GM12878 (cell line): ENCODE measurements at regions of chr4 and their contacts with region 1.

Region 1: DNA sequence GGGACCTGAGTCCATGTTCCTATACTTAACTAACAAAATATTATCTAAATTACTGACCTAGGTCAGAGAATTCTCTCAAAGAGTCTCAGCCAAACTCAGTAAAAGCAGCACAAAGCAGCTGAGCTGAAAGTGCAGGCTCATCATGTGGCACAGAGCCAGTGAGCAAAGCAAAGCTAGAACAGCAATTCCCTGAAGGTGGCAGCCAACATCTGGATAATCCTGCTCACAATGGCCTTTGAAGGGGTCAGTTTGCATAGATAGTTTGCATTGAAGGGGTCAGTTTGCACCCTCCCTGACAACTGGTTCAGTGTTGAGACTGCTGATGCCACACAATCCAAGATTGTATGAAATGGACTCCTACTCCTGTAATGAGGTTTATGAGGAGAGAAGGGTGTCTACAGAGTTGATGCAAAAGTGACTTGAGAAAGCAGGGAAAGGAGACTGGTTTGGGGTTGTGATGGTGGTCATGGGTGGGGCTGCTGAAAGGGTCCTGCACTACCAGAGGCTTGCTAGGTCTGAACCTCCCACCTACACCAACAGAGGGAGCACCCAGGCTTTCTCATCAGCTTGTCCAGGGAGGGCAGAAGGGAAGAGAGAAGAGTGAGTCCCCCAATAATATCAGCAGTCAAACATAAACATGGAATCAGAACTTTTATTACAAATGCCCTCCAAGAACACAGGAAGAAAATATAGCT is 39.7 kb downstream of the TRIM61 start:
- DNase-seq: peak; percentile 25
- ATAC-seq: peak; percentile 71
- H3K4me3 ChIP-seq: no peak overlapping the region
- H3K27ac ChIP-seq: peak overlapping the region; percentile 30; the same call in 1 of the 2 replicates
- H3K4me1 ChIP-seq: peaks cover 23% of the 10 kb centered on the region
- H3K27me3 ChIP-seq: no peaks in the 10 kb centered on the region
- CTCF ChIP-seq: peak; percentile 43 to 65 (median 56)
- EP300 ChIP-seq: no peak
- POLR2A ChIP-seq: no peak
- RAD21 ChIP-seq: peak; percentile 46; the same call in 1 of the 2 replicates

Region 2: DNA sequence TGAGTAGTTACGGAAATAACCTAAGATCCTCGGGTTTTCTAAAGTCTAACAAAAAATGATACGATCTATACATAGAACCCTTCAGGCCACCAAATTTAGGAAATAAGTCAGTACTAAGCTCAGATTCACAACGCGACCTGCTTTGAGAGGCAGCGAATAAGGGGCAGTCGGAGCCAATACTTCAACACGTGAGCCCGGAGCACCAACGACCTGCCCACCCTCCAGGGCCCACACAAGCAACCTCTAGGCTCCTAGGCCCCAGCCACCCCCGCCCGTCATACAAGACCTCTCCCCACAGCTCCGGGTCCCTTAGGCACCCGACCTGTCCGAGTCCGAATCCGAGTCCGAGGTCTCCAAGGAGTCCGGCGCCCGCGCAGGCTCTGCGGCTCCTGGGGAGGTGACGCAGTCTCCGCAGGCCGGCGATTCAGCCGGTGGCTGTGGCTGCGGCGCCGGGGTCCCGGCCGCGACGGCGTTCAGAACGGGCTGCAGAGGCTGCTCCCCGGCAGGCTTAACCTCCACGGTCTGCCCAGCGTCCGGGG is 1771.6 kb before region 1 on chr4:
- CTCF ChIA-PET with region 1: no interaction called
- POLR2A ChIA-PET with region 1: no interaction called
- RAD21 ChIA-PET with region 1: no interaction called
- SMC1A ChIA-PET with region 1: no interaction called
- in situ Hi-C with region 1: loop called (anchors 25 kb)
- intact Hi-C with region 1: no loop called
- DNase-seq: no peak
- ATAC-seq: peak; percentile 81
- H3K4me3 ChIP-seq: peak overlapping the region; percentile 81
- H3K27ac ChIP-seq: peak overlapping the region; percentile 71
- H3K4me1 ChIP-seq: 0 out of 2 replicates have a peak, but pooled peaks cover 3% of the 10 kb centered on the region
- H3K27me3 ChIP-seq: no peaks in the 10 kb centered on the region
- CTCF ChIP-seq: no peak
- EP300 ChIP-seq: no peak
- POLR2A ChIP-seq: peak; percentile 7
- RAD21 ChIP-seq: no peak

Region 3: GRCh38 chr4:164779811-164780216 is 157.9 kb before region 1 on chr4:
- CTCF ChIA-PET with region 1: interaction called, 19 read pairs
- POLR2A ChIA-PET with region 1: interaction called, 3 read pairs
- RAD21 ChIA-PET with region 1: interaction called, 10 read pairs
- SMC1A ChIA-PET with region 1: interaction called, 37 read pairs
- in situ Hi-C with region 1: no loop called
- intact Hi-C with region 1: loop called (anchors 5 kb)
- DNase-seq: peak; percentile 30
- ATAC-seq: peak; percentile 73
- H3K4me3 ChIP-seq: no peak overlapping the region
- H3K27ac ChIP-seq: no peak overlapping the region
- H3K4me1 ChIP-seq: no peaks in the 10 kb centered on the region
- H3K27me3 ChIP-seq: no peaks in the 10 kb centered on the region
- CTCF ChIP-seq: peak; percentile 91 to 94 (median 94)
- EP300 ChIP-seq: no peak
- POLR2A ChIP-seq: no peak
- RAD21 ChIP-seq: peak; percentile 90

Region 4: GRCh38 chr4:164888096-164888715 is 49.5 kb before region 1 on chr4:
- CTCF ChIA-PET with region 1: interaction called, 10 read pairs
- POLR2A ChIA-PET with region 1: no interaction called
- RAD21 ChIA-PET with region 1: interaction called, 7 read pairs
- SMC1A ChIA-PET with region 1: interaction called, 23 read pairs
- in situ Hi-C with region 1: no loop called
- intact Hi-C with region 1: loop called (anchors 2 kb)
- DNase-seq: no peak
- ATAC-seq: peak; percentile 31; the same call in 2 of the 3 replicates
- H3K4me3 ChIP-seq: no peak overlapping the region
- H3K27ac ChIP-seq: no peak overlapping the region
- H3K4me1 ChIP-seq: peaks cover 19% of the 10 kb centered on the region
- H3K27me3 ChIP-seq: no peaks in the 10 kb centered on the region
- CTCF ChIP-seq: no peak
- EP300 ChIP-seq: no peak
- POLR2A ChIP-seq: no peak
- RAD21 ChIP-seq: no peak

Region 5: GRCh38 chr4:164949448-164950143 is 11.9 kb after region 1 on chr4:
- CTCF ChIA-PET with region 1: interaction called, 185 read pairs
- POLR2A ChIA-PET with region 1: interaction called, 25 read pairs
- RAD21 ChIA-PET with region 1: interaction called, 58 read pairs
- SMC1A ChIA-PET with region 1: interaction called, 88 read pairs
- in situ Hi-C with region 1: no loop called
- intact Hi-C with region 1: no loop called
- DNase-seq: no peak
- ATAC-seq: peak; percentile 75
- H3K4me3 ChIP-seq: no peak overlapping the region
- H3K27ac ChIP-seq: no peak overlapping the region
- H3K4me1 ChIP-seq: no peaks in the 10 kb centered on the region
- H3K27me3 ChIP-seq: no peaks in the 10 kb centered on the region
- CTCF ChIP-seq: peak; percentile 24 to 50 (median 39); a peak in 4 of 6 replicates
- EP300 ChIP-seq: no peak
- POLR2A ChIP-seq: no peak
- RAD21 ChIP-seq: 0 out of 2 replicates have a peak, but pooled peaks have one; percentile 16

Region 6: DNA sequence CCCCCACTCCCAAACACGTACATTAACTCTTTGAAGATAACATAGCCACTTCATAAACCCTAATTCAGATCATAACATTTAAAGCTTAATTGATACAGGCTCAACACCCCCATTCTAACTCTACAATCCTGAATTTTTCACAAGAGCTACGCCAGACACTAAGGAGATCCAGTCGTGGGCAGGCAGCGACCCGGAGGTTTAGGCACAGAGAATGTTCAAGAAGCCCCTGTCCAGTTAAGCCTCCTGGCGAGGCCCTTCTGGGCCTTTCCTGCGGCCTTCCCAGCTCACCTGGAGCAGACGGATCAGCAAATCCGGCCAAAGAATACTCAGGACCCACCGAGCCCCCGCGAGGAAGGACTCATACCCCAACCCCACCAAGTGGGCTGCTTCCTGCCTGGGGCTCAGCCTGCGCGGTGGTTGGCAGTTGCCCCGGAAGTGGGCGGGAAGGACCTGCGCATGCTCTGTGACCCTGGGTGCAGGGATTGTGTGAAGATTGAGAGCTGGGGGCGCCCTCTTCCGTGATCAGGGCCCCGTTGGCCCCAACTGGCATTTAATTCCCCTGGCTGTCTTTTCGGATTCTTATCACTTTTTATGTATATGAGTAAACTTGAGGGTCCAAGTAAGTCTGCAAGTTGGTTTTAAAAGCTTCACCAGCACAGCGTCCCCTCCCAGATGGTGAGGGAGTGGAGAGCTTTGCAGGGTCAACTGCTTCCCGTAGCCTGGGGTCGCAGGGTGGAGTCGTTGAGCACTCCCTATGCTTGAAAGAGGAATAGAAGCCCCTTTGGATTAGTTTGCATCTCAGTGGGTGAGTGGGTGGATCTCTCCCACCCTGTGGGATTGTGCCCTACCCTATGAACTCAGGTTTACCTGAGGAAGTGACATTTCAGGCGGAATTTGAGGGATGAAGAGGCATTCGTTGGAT is 39.8 kb after region 1 on chr4 and contains the start of gene TRIM61:
- CTCF ChIA-PET with region 1: interaction called, 65 read pairs
- POLR2A ChIA-PET with region 1: interaction called, 3 read pairs
- RAD21 ChIA-PET with region 1: interaction called, 13 read pairs
- SMC1A ChIA-PET with region 1: interaction called, 31 read pairs
- in situ Hi-C with region 1: no loop called
- intact Hi-C with region 1: no loop called
- DNase-seq: peak; percentile 54
- ATAC-seq: peak; percentile 99
- H3K4me3 ChIP-seq: peak within 1 kb of the TSS; percentile 76
- H3K27ac ChIP-seq: peak within 1 kb of the TSS; percentile 76
- H3K4me1 ChIP-seq: no peaks in the 10 kb centered on the region; the same call in 1 of the 2 replicates
- H3K27me3 ChIP-seq: no peaks in the 10 kb centered on the region
- CTCF ChIP-seq: peak; percentile 29 to 55 (median 40); a peak in 5 of 6 replicates
- EP300 ChIP-seq: no peak
- POLR2A ChIP-seq: peak; percentile 91
- RAD21 ChIP-seq: peak; percentile 55
- polyA plus RNA-seq, gene TRIM61: 7.1 to 9.0 TPM

Region 7: GRCh38 chr4:165096776-165097175 is 159.1 kb after region 1 on chr4:
- CTCF ChIA-PET with region 1: interaction called, 17 read pairs
- POLR2A ChIA-PET with region 1: no interaction called
- RAD21 ChIA-PET with region 1: interaction called, 12 read pairs
- SMC1A ChIA-PET with region 1: interaction called, 15 read pairs
- in situ Hi-C with region 1: no loop called
- intact Hi-C with region 1: loop called (anchors 5 kb)
- DNase-seq: no peak
- ATAC-seq: peak; percentile 33; the same call in 2 of the 3 replicates
- H3K4me3 ChIP-seq: no peak overlapping the region
- H3K27ac ChIP-seq: no peak overlapping the region
- H3K4me1 ChIP-seq: no peaks in the 10 kb centered on the region
- H3K27me3 ChIP-seq: no peaks in the 10 kb centered on the region
- CTCF ChIP-seq: peak in 2 of 3 experiments; percentile 48 to 54; a peak in 5 of 6 replicates
- EP300 ChIP-seq: no peak
- POLR2A ChIP-seq: no peak
- RAD21 ChIP-seq: peak; percentile 42